ENCODE measurements at regions of chr7 and their contacts with region 1.

Region 1: DNA sequence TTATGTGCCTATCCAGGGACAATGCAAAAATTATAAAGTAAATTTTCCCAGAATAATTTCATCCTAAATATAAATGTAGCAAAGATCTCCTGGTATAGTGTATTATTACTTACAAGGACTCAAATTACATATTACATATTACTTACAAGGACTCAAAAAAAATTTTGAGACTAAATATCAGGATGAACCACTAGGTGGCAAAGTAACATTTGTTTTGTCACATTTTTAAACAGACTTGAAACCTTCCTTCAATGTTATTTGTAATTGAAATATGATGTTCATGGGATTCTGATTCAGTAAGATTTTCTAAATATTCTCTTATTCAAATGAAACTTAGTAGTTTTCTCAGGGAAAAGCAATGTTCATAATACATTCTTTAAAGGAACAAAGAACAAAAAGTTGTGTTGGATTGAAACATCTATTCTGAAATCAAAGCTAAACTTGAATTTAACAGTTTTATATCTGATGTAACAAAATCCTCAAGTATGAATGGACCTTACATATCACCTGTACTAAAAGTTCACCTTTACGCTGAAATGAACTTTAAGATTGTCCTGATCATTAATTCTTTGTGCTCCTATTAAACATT is 74.3 kb upstream of the GNAI1 start:
- DNase-seq: no peak
- H3K4me3 Mint-ChIP-seq: no peak overlapping the region
- H3K27ac Mint-ChIP-seq: no peak overlapping the region
- H3K4me1 Mint-ChIP-seq: no peaks in the 10 kb centered on the region
- H3K27me3 Mint-ChIP-seq: no peaks in the 10 kb centered on the region

Region 2: GRCh38 chr7:80335511-80336231 is 275.4 kb after region 1 on chr7:
- intact Hi-C with region 1: no loop called
- DNase-seq: no peak
- H3K4me3 Mint-ChIP-seq: no peak overlapping the region
- H3K27ac Mint-ChIP-seq: no peak overlapping the region
- H3K4me1 Mint-ChIP-seq: no peaks in the 10 kb centered on the region
- H3K27me3 Mint-ChIP-seq: no peaks in the 10 kb centered on the region

Region 3: GRCh38 chr7:80392229-80393169 is 332.2 kb after region 1 on chr7:
- intact Hi-C with region 1: loop called (anchors 1 kb)
- DNase-seq: no peak
- H3K4me3 Mint-ChIP-seq: no peak overlapping the region
- H3K27ac Mint-ChIP-seq: no peak overlapping the region
- H3K4me1 Mint-ChIP-seq: no peaks in the 10 kb centered on the region
- H3K27me3 Mint-ChIP-seq: no peaks in the 10 kb centered on the region

Region 4: GRCh38 chr7:80453699-80454340 is 393.5 kb after region 1 on chr7:
- intact Hi-C with region 1: loop called (anchors 1 kb)
- DNase-seq: no peak
- H3K4me3 Mint-ChIP-seq: no peak overlapping the region
- H3K27ac Mint-ChIP-seq: no peak overlapping the region
- H3K4me1 Mint-ChIP-seq: no peaks in the 10 kb centered on the region
- H3K27me3 Mint-ChIP-seq: no peaks in the 10 kb centered on the region

Region 5: GRCh38 chr7:80659120-80660055 is 599.1 kb after region 1 on chr7:
- intact Hi-C with region 1: loop called (anchors 1 kb)
- DNase-seq: no peak
- H3K4me3 Mint-ChIP-seq: no peak overlapping the region
- H3K27ac Mint-ChIP-seq: no peak overlapping the region
- H3K4me1 Mint-ChIP-seq: no peaks in the 10 kb centered on the region
- H3K27me3 Mint-ChIP-seq: no peaks in the 10 kb centered on the region

Region 6: GRCh38 chr7:80781561-80781979 is 721.3 kb after region 1 on chr7:
- intact Hi-C with region 1: no loop called
- DNase-seq: no peak
- H3K4me3 Mint-ChIP-seq: no peak overlapping the region
- H3K27ac Mint-ChIP-seq: no peak overlapping the region
- H3K4me1 Mint-ChIP-seq: no peaks in the 10 kb centered on the region
- H3K27me3 Mint-ChIP-seq: no peaks in the 10 kb centered on the region

Measured in activated T-helper 1 cell treated with anti-CD3 and anti-CD28 coated beads, Interleukin-12 subunit alpha, Interleukin-12 subunit beta, Interleukin-2, Interleukin-4 antibody, amounts not matched to agents 30 ng/mL and 10 ng/mL and 1 ng/mL, durations not matched to agents 14 hours and 24 hours and 36 hours (primary cell).